Caco-2 (cell line): ENCODE measurements at regions of chr5 and their contacts with region 1.

Region 1: GRCh38 chr5:30749971-30750370 is 443.5 kb upstream of the CDH6 start:
- DNase-seq: no peak
- H3K4me3 ChIP-seq: no peak overlapping the region
- H3K4me3 Mint-ChIP-seq: no peak overlapping the region
- H3K27ac Mint-ChIP-seq: no peak overlapping the region
- H3K4me1 ChIP-seq: no peaks in the 10 kb centered on the region
- H3K4me1 Mint-ChIP-seq: no peaks in the 10 kb centered on the region
- H3K27me3 ChIP-seq: no peaks in the 10 kb centered on the region
- H3K27me3 Mint-ChIP-seq: peaks cover 2% of the 10 kb centered on the region
- CTCF ChIP-seq: no peak

Region 2: DNA sequence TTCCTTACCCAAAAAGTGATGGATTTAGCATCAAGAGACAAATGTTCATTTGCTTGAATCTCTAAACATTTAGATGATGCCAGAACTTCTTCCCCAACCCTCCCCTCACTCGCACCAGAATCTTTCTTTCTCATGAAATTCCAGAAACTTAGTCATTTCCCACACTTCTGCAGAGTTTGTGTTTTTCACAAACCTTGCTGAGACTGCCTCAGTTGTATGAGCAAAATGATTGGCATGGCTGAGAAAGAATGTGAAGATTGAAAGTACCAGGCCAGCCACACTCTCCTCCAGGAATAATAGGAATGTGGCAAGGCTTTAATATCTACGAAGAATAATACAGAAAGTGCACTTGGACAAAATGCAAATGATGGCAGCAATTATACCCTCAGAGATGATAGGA is 15.3 kb after region 1 on chr5:
- CTCF ChIA-PET with region 1: no interaction called
- POLR2A ChIA-PET with region 1: no interaction called
- intact Hi-C with region 1: no loop called
- DNase-seq: no peak
- H3K4me3 ChIP-seq: no peak overlapping the region
- H3K4me3 Mint-ChIP-seq: no peak overlapping the region
- H3K27ac Mint-ChIP-seq: no peak overlapping the region
- H3K4me1 ChIP-seq: no peaks in the 10 kb centered on the region
- H3K4me1 Mint-ChIP-seq: no peaks in the 10 kb centered on the region
- H3K27me3 ChIP-seq: no peaks in the 10 kb centered on the region
- H3K27me3 Mint-ChIP-seq: no peaks in the 10 kb centered on the region
- CTCF ChIP-seq: no peak

Region 3: GRCh38 chr5:31213705-31214121 is 463.7 kb after region 1 on chr5:
- CTCF ChIA-PET with region 1: interaction called, 11 read pairs
- POLR2A ChIA-PET with region 1: no interaction called
- intact Hi-C with region 1: no loop called
- DNase-seq: peak; percentile 77 to 81
- H3K4me3 ChIP-seq: peak overlapping the region; percentile 28
- H3K4me3 Mint-ChIP-seq: peak overlapping the region; percentile 87
- H3K27ac Mint-ChIP-seq: peak overlapping the region; percentile 97
- H3K4me1 ChIP-seq: peaks cover 61% of the 10 kb centered on the region
- H3K4me1 Mint-ChIP-seq: peaks cover 19% of the 10 kb centered on the region
- H3K27me3 ChIP-seq: no peaks in the 10 kb centered on the region
- H3K27me3 Mint-ChIP-seq: no peaks in the 10 kb centered on the region
- CTCF ChIP-seq: peak in 1 of 2 experiments; percentile 12